Transverse colon (tissue), 4 donors: ENCODE measurements at regions of chr21 and their contacts with region 1.

Region 1: DNA sequence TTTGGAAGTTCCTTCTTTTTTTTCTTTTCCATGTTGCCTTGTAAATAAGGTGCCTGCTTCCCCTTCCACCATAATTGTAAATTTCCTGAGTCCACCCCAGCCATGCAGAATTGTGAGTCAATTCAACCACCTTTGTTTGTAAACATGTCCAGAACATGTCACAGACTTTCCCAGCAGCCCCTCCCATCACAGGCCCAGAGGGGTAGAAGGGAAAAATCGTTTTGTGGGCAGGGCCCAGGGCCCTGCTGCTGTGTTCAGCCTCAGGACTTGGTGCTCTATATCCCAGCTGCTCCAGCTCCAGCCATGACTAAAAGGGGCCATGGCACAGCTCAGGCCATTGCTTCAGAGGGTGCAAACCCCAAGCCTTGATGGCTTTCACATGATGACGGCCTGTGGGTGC is 384.6 kb upstream of the NCAM2 start:
- DNase-seq: no peak
- H3K4me3 ChIP-seq: no peak overlapping the region
- H3K27ac ChIP-seq: no peak overlapping the region
- H3K4me1 ChIP-seq: no peaks in the 10 kb centered on the region
- H3K27me3 ChIP-seq: no peaks in the 10 kb centered on the region
- CTCF ChIP-seq: no peak
- EP300 ChIP-seq: no peak
- POLR2A ChIP-seq: no peak

Region 2: DNA sequence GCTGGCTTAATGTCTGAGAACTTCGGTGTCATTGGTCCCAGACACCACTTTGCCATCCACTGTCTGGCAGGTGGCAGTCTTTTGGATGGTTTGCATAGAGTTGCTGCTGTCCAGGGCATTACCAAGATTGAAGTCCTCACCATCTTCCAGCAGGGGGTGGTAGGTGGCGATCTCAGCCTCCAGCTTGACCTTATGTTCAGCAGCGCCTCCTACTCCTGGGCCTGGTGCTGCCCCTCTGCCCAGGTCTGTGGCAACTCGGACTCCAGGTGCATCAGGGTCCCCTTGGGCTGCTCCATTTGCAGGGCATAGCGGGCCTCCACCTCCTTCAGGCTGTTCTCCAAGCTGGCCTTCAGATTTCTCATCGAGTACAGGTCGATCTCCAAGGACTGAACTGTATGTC is 188.7 kb before region 1 on chr21:
- in situ Hi-C with region 1: no loop called
- intact Hi-C with region 1: no loop called
- DNase-seq: no peak
- H3K4me3 ChIP-seq: no peak overlapping the region
- H3K27ac ChIP-seq: no peak overlapping the region
- H3K4me1 ChIP-seq: no peaks in the 10 kb centered on the region
- H3K27me3 ChIP-seq: no peaks in the 10 kb centered on the region
- CTCF ChIP-seq: no peak
- EP300 ChIP-seq: no peak
- POLR2A ChIP-seq: no peak

Region 3: DNA sequence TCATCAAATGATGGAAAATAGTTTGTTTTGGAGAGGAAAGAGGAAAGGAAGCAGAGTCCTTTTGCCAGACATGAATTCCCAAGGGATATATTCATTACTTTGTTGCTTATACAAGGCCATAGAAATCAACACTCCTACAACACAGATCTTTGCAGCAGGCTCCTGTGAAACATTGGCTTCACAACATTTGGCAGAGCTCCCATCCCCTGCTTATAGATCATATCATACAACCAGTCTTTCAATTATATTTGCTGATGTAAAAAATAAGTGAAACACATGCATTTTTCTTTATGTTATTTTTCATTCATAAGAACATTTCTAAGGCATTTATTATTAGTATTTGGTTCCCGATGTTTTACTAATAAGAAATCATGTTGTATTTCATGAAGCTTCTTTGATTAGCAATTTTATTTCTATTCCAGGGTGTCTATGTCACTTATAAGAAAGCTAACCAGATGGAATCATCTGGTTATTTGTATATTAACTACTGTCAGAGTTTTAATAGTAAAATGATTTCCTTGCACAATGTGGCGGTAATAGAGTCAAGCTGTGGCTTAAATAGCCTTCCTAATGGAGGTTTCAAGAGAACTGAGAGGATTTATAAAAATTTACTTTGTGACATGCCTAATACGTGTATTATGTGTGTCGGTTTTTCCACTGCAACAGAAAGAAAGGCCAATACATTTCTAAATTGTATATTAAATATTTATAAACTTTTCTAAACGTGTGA is 85.8 kb before region 1 on chr21:
- in situ Hi-C with region 1: no loop called
- intact Hi-C with region 1: no loop called
- DNase-seq: no peak
- H3K4me3 ChIP-seq: no peak overlapping the region
- H3K27ac ChIP-seq: no peak overlapping the region
- H3K4me1 ChIP-seq: no peaks in the 10 kb centered on the region
- H3K27me3 ChIP-seq: no peaks in the 10 kb centered on the region
- CTCF ChIP-seq: no peak
- EP300 ChIP-seq: no peak
- POLR2A ChIP-seq: no peak

Region 4: DNA sequence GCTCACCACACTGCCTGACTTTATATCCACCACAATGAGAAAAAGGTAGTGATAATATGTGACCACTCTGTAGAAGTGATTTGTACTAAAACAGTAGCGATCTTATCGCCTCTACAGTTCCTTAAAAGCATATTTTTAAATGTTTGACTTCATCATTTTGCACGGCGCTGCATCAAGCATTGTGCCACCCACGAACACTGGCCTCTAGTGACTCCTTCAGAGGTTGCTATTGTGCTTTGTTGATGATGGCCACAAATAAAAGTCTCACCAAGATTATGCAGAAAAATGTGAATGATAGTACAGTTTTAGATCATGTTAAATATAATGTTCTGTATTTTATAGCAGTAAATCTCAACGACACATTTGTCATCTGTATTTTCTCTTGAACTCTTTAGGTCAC is 198.0 kb after region 1 on chr21:
- in situ Hi-C with region 1: no loop called
- intact Hi-C with region 1: no loop called
- DNase-seq: no peak
- H3K4me3 ChIP-seq: no peak overlapping the region
- H3K27ac ChIP-seq: no peak overlapping the region
- H3K4me1 ChIP-seq: no peaks in the 10 kb centered on the region
- H3K27me3 ChIP-seq: no peaks in the 10 kb centered on the region
- CTCF ChIP-seq: no peak
- EP300 ChIP-seq: no peak
- POLR2A ChIP-seq: no peak

Region 5: GRCh38 chr21:21463456-21463855 is 849.8 kb after region 1 on chr21:
- in situ Hi-C with region 1: no loop called
- intact Hi-C with region 1: loop called (anchors 5 kb)
- DNase-seq: no peak
- H3K4me3 ChIP-seq: no peak overlapping the region
- H3K27ac ChIP-seq: no peak overlapping the region
- H3K4me1 ChIP-seq: no peaks in the 10 kb centered on the region
- H3K27me3 ChIP-seq: no peaks in the 10 kb centered on the region
- CTCF ChIP-seq: no peak
- EP300 ChIP-seq: no peak
- POLR2A ChIP-seq: no peak